Posterior vena cava (tissue), 2 donors: ENCODE measurements at regions of chr2 and their contacts with region 1.

Region 1: GRCh38 chr2:189466660-189467059 is 25.4 kb downstream of the WDR75 start:
- DNase-seq: no peak

Region 2: DNA sequence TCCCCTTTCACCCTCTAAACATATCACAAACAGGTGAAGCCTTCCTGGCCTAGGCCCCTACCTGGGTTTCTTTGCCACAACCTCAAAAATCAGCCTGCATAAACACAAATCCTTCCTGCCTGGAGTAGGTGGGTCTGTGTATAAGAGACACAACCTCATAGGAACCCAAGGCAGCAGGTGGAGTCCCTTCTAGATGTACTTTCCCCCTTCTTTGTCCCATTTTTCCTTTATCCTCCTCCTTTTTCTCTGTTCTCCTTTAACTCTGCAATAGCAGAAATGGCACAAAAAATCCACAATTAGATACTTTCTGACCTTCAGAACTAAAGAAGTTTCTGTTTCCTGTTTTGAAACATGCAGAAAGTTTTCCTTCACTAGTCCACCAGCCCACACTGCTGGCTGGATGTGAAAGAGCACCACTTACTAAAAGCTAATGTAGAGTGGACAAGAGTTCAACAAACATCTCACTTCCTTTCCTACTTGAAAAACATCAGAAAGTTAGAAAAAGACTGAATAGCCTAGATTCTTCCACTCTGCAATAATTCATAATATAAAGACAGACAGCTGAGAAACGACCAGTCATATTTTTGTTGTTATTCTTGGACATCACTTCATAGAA is 102.7 kb after region 1 on chr2:
- intact Hi-C with region 1: loop called in 1 of 2 experiments (anchors 10 kb)
- DNase-seq: no peak